Mammary epithelial cell (primary cell): ENCODE measurements at regions of chr7 and their contacts with region 1.

Region 1: GRCh38 chr7:24572997-24573625 is at the start of gene PALS2:
- DNase-seq: peak; percentile 80
- H3K4me3 ChIP-seq: peak within 1 kb of the TSS; percentile 84 to 91 (median 88)
- H3K27ac ChIP-seq: peak within 1 kb of the TSS; percentile 90
- H3K4me1 ChIP-seq: peaks cover 17% of the 10 kb centered on the region
- H3K27me3 ChIP-seq: no peaks in the 10 kb centered on the region
- CTCF ChIP-seq: no peak
- total RNA-seq, gene PALS2: 36.2 to 39.5 TPM

Region 2: DNA sequence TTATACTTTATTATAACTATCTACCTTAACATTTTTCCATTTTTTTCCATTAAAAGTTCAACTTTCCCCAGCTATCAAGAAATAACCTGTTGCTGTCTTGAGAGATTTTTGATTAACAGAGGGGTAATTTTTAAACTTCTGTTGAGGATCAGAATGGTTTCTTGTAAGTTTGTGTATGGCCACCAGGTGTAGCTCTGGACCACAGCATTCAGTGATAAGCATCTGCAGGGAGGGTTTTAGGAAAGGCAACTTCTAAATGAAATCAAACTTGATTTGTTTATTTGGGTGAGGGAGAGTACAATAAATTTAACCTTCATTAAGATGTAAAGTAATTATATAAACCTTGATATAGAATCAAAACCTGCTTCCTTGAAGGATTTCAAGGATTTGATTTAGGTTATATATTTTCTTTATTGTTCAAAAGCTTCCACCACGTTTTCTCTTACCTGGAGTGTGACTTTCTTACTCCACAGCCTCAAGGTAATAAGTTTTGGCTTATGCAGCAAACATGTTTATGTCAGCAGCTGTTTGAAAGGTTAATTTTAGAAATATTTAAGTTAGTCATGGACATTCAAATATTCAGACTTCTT is 709.8 kb before region 1 on chr7:
- CTCF ChIA-PET with region 1: no interaction called
- dilution Hi-C with region 1: no loop called
- in situ Hi-C with region 1: no loop called
- intact Hi-C with region 1: loop called (anchors 10 kb)
- DNase-seq: peak; percentile 20
- H3K4me3 ChIP-seq: no peak overlapping the region
- H3K27ac ChIP-seq: no peak overlapping the region
- H3K4me1 ChIP-seq: no peaks in the 10 kb centered on the region
- H3K27me3 ChIP-seq: no peaks in the 10 kb centered on the region
- CTCF ChIP-seq: peak; percentile 73 to 94

Region 3: DNA sequence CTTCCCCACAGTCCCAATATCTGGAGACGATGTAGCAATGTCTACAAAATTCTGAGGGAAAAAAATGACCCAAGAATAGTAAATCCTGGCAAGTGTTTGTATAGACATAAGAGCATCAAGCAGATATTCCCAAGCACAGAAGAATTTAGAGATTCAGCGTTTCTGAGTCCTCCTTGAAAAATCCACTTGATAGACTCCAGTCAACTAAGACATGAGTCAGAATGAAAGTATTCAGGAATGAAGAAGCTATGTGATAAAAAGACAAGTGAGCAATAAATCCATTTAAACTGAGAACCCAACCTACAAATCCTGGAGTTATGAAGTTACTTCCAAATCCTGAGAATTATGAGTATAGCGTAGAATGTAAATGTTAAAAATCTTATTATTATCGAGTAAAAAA is 375.3 kb before region 1 on chr7:
- CTCF ChIA-PET with region 1: no interaction called
- dilution Hi-C with region 1: no loop called
- in situ Hi-C with region 1: no loop called
- intact Hi-C with region 1: no loop called
- DNase-seq: no peak
- H3K4me3 ChIP-seq: no peak overlapping the region
- H3K27ac ChIP-seq: no peak overlapping the region
- H3K4me1 ChIP-seq: no peaks in the 10 kb centered on the region
- H3K27me3 ChIP-seq: no peaks in the 10 kb centered on the region
- CTCF ChIP-seq: no peak